CD8-positive, alpha-beta memory T cell (primary cell): ENCODE measurements at regions of chr6 and their contacts with region 1.

Region 1: GRCh38 chr6:152184917-152185574 is 377.6 kb downstream of the ESR1 start:
- DNase-seq: peak in 3 of 5 donors; percentile 45 to 55 (median 49)
- H3K4me3 ChIP-seq: peak overlapping the region; percentile 56
- H3K4me3 Mint-ChIP-seq: peak overlapping the region; percentile 86 to 96 (median 92)
- H3K27ac ChIP-seq: peak overlapping the region; percentile 80
- H3K27ac Mint-ChIP-seq: peak overlapping the region; percentile 85 to 99 (median 98)
- H3K4me1 ChIP-seq: peaks cover 57% of the 10 kb centered on the region
- H3K4me1 Mint-ChIP-seq: peaks cover 73 to 87% (median 73%) of the 10 kb centered on the region in 3 donors
- H3K27me3 ChIP-seq: no peaks in the 10 kb centered on the region
- H3K27me3 Mint-ChIP-seq: no peaks in the 10 kb centered on the region

Region 2: DNA sequence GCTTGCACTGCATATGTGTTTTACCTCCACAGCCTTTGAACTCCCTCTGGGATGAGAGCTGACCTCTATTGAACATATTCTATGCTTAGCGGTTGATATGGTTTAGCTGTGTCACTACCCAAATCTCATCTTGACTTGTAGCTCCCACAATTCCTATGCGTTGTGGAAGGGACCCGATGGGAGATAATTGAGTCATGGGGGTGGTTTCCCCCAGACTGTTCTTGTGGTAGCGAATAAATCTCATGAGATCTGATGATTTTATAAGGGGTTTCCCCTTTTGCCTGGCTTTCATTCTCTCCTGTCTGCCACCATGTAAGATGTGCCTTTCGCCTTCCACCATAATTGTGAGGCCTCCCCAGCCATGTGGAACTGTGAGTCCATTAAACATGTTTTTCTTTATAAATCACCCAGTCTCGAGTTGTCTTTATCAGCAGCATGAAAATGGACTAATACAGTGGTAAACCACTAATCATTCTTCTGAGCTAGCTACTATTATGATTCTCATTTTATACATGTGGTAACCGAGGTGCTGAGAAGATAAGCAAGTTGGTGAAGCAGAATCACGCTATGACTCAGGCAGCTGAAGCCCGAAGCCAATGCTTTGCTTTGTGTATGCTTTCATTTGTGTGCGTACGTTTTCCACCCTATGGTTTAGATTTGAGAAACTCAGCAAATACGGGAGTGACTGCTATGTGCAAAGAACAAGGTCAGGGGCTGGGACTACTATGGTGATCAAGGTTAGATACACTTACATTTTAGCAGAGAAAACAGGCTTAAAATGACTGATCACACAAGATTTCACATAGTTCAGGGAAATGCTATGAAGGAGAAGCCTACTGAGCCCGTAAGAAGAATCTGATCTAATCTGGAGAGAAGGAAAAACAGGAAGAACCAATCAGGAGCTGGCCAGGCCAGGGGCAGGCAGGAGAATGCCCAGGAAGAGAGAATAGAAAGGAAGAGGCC is 14.1 kb before region 1 on chr6:
- CTCF ChIA-PET with region 1: interaction called, 13 read pairs
- POLR2A ChIA-PET with region 1: interaction called, 15 read pairs
- DNase-seq: peak in 4 of 5 donors; percentile 25 to 79 (median 48)
- H3K4me3 ChIP-seq: peak overlapping the region; percentile 41
- H3K4me3 Mint-ChIP-seq: peak overlapping the region; percentile 69 to 84 (median 76)
- H3K27ac ChIP-seq: peak overlapping the region; percentile 73
- H3K27ac Mint-ChIP-seq: peak overlapping the region; percentile 94 to 99 (median 96)
- H3K4me1 ChIP-seq: peaks cover 41% of the 10 kb centered on the region
- H3K4me1 Mint-ChIP-seq: peaks cover 58 to 75% (median 72%) of the 10 kb centered on the region in 3 donors
- H3K27me3 ChIP-seq: no peaks in the 10 kb centered on the region
- H3K27me3 Mint-ChIP-seq: no peaks in the 10 kb centered on the region

Region 3: GRCh38 chr6:152301764-152302568 is 116.9 kb after region 1 on chr6:
- CTCF ChIA-PET with region 1: interaction called, 5 read pairs
- POLR2A ChIA-PET with region 1: interaction called, 12 read pairs
- DNase-seq: peak; percentile 81 to 91 (median 88)
- H3K4me3 ChIP-seq: peak overlapping the region; percentile 97
- H3K4me3 Mint-ChIP-seq: peak overlapping the region; percentile 95 to 100 (median 100)
- H3K27ac ChIP-seq: peak overlapping the region; percentile 85
- H3K27ac Mint-ChIP-seq: peak overlapping the region; percentile 93 to 100 (median 98)
- H3K4me1 ChIP-seq: peaks cover 31% of the 10 kb centered on the region
- H3K4me1 Mint-ChIP-seq: peaks cover 30 to 49% (median 42%) of the 10 kb centered on the region in 3 donors
- H3K27me3 ChIP-seq: no peaks in the 10 kb centered on the region
- H3K27me3 Mint-ChIP-seq: no peaks in the 10 kb centered on the region